CD4-positive, alpha-beta T cell (primary cell): ENCODE measurements at regions of chr5 and their contacts with region 1.

Region 1: GRCh38 chr5:145500710-145501109 is 334.4 kb downstream of the PRELID2 start:
- DNase-seq: no peak
- ATAC-seq: no peak
- H3K4me3 ChIP-seq: no peak overlapping the region
- H3K4me3 Mint-ChIP-seq: no peak overlapping the region
- H3K27ac ChIP-seq: no peak overlapping the region
- H3K27ac Mint-ChIP-seq: no peak overlapping the region
- H3K4me1 ChIP-seq: no peaks in the 10 kb centered on the region
- H3K4me1 Mint-ChIP-seq: no peaks in the 10 kb centered on the region
- H3K27me3 ChIP-seq: no peaks in the 10 kb centered on the region
- H3K27me3 Mint-ChIP-seq: no peaks in the 10 kb centered on the region
- CTCF ChIP-seq: no peak

Region 2: GRCh38 chr5:145521066-145521465 is 20.4 kb after region 1 on chr5:
- CTCF ChIA-PET with region 1: no interaction called
- POLR2A ChIA-PET with region 1: no interaction called
- intact Hi-C with region 1: loop called in 1 of 2 experiments (anchors 1 kb)
- DNase-seq: no peak
- ATAC-seq: no peak
- H3K4me3 ChIP-seq: no peak overlapping the region
- H3K4me3 Mint-ChIP-seq: no peak overlapping the region
- H3K27ac ChIP-seq: no peak overlapping the region
- H3K27ac Mint-ChIP-seq: no peak overlapping the region
- H3K4me1 ChIP-seq: no peaks in the 10 kb centered on the region
- H3K4me1 Mint-ChIP-seq: no peaks in the 10 kb centered on the region
- H3K27me3 ChIP-seq: no peaks in the 10 kb centered on the region
- H3K27me3 Mint-ChIP-seq: no peaks in the 10 kb centered on the region
- CTCF ChIP-seq: no peak